IMR-90 (cell line): ENCODE measurements at regions of chr7 and their contacts with region 1.

Region 1: GRCh38 chr7:41399171-41399570 is 303.7 kb downstream of the INHBA start:
- DNase-seq: peak; percentile 19
- ATAC-seq: no peak
- H3K4me3 ChIP-seq: no peak overlapping the region
- H3K27ac ChIP-seq: no peak overlapping the region
- H3K4me1 ChIP-seq: no peaks in the 10 kb centered on the region; the same call in 1 of the 2 replicates
- H3K27me3 ChIP-seq: no peaks in the 10 kb centered on the region
- CTCF ChIP-seq: no peak
- POLR2A ChIP-seq: no peak
- RAD21 ChIP-seq: no peak

Region 2: GRCh38 chr7:41385996-41386395 is 13.2 kb before region 1 on chr7:
- CTCF ChIA-PET with region 1: no interaction called
- POLR2A ChIA-PET with region 1: interaction called, 12 read pairs
- dilution Hi-C with region 1: no loop called
- in situ Hi-C with region 1: no loop called
- intact Hi-C with region 1: no loop called
- DNase-seq: peak; percentile 2
- ATAC-seq: no peak
- H3K4me3 ChIP-seq: no peak overlapping the region
- H3K27ac ChIP-seq: no peak overlapping the region
- H3K4me1 ChIP-seq: peaks cover 4% of the 10 kb centered on the region
- H3K27me3 ChIP-seq: no peaks in the 10 kb centered on the region
- CTCF ChIP-seq: no peak
- POLR2A ChIP-seq: no peak
- RAD21 ChIP-seq: no peak